HEK293 (cell line): ENCODE measurements at regions of chr11 and their contacts with region 1.

Region 1: DNA sequence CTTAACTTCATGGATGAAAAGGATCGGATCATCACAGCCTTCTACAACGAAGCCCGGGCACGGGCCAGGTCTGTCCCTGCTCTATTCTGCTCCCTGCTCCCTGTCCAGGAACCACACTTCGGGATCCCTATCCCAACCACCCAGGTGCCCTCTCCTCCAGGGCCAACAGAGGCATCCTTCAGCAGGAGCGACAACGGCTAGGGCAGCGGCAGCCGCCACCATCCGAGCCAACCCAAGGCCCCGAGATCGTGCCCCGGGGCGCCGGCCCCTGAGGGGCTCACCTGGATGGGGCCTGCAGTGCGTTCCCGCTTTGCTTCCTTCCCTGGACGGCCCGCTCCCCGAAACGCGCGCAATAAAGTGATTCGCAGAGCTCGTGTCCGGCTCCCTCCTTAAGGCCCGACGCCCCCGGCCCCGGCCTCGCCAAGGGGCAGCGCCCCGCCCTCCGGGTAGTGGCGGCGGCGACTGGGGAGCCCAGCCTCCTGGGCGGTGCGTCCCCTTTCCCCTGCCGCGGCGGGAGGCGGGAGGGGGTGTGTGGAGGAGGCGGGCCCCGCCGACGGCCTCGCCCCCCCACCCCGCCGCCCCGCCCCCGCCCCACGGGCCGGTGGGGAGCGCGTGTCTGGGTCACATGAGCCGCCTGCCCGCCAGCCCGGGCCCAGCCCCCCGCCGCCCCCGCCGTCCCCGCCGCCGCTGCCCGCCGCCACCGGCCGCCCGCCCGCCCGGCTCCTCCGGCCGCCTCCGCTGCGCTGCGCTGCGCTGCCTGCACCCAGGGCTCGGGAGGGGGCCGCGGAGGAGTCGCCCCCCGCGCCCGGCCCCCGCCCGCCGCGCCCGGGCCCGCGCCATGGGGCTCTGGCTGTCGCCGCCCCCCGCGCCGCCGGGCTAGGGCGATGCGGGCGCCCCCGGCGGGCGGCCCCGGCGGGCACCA is at the start of gene VEGFB:
- H3K4me3 ChIP-seq: peak within 1 kb of the TSS; percentile 43
- H3K27ac ChIP-seq: peak within 1 kb of the TSS; percentile 68; the same call in 1 of the 2 replicates
- H3K4me1 ChIP-seq: no peaks in the 10 kb centered on the region
- CTCF ChIP-seq: peak; percentile 22; the same call in 1 of the 2 replicates

Region 2: GRCh38 chr11:64245797-64246620 is 11.8 kb after region 1 on chr11:
- CTCF ChIA-PET with region 1: interaction called, 12 read pairs
- POLR2A ChIA-PET with region 1: interaction called, 18 read pairs
- H3K4me3 ChIP-seq: peak overlapping the region; percentile 68
- H3K27ac ChIP-seq: peak overlapping the region; percentile 66; the same call in 1 of the 2 replicates
- H3K4me1 ChIP-seq: peaks cover 4% of the 10 kb centered on the region
- CTCF ChIP-seq: no peak

Region 3: DNA sequence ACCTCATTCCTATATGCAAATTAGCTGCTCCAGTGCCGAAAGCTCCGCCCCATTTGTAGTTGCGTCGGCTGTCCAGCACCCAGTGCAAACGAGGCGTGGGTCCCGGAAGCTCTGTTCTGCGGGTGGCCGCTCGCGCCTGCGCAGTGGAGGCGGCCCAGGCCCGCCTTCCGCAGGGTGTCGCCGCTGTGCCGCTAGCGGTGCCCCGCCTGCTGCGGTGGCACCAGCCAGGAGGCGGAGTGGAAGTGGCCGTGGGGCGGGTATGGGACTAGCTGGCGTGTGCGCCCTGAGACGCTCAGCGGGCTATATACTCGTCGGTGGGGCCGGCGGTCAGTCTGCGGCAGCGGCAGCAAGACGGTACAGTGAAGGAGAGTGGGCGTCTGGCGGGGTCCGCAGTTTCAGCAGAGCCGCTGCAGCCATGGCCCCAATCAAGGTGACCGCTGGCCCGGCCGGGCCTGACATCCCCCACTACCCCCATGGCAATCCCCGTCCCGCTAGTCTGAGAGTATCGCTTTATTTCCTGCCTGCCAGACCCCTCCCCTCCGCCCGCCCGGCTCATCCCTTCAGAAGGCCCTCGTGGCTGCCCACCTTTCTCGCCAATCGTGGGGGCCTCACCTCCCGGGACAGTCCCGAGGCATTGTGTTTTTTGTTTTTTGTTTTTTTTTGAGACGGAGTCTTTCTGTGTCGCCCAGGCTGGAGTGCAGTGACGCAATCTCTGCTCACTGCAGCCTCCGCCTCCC is 84.0 kb after region 1 on chr11 and contains the start of gene PRDX5:
- CTCF ChIA-PET with region 1: no interaction called
- POLR2A ChIA-PET with region 1: no interaction called
- H3K4me3 ChIP-seq: peak within 1 kb of the TSS; percentile 90
- H3K27ac ChIP-seq: peak within 1 kb of the TSS; percentile 88
- H3K4me1 ChIP-seq: no peaks in the 10 kb centered on the region
- CTCF ChIP-seq: peak; percentile 95